PC-9 (cell line): ENCODE measurements at regions of chr1 and their contacts with region 1.

Region 1: DNA sequence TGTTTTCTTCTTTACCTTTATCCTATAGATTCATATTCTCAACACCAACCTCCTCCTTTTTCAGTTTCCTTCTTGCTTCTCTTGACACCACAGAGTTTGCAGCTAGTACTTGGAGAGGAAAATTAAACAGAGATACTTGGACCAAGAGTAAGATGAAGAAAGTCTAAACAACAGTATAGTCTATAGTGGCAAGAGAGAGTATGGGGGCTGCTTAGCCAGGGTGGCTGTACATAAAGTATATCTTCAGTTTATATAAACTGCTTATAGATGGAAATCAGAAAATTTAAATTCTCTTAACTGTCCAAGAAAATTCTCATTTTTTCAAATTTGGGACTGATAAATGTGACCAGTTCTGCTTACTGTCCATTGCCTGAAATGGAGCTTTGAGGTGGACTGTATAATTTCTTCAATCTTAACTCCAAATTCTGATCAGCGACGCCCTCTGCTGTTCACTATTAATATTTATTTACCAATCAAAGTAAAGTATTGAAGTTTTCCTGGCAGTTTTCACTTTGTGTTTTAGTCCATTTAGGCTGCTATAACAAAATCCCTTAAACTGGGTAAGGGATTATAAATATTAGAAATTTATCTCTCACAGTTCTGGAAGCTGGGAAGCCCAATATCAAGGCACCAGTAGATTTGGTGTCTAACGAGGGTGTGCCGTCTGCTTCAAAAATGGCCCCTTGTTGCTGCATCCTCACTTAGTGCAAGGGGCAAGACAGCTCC is 14.8 kb upstream of the METTL18 start:
- DNase-seq: no peak
- H3K4me3 ChIP-seq: no peak overlapping the region
- H3K27ac ChIP-seq: no peak overlapping the region
- H3K4me1 ChIP-seq: no peaks in the 10 kb centered on the region
- H3K27me3 ChIP-seq: no peaks in the 10 kb centered on the region
- CTCF ChIP-seq: peak; percentile 84

Region 2: DNA sequence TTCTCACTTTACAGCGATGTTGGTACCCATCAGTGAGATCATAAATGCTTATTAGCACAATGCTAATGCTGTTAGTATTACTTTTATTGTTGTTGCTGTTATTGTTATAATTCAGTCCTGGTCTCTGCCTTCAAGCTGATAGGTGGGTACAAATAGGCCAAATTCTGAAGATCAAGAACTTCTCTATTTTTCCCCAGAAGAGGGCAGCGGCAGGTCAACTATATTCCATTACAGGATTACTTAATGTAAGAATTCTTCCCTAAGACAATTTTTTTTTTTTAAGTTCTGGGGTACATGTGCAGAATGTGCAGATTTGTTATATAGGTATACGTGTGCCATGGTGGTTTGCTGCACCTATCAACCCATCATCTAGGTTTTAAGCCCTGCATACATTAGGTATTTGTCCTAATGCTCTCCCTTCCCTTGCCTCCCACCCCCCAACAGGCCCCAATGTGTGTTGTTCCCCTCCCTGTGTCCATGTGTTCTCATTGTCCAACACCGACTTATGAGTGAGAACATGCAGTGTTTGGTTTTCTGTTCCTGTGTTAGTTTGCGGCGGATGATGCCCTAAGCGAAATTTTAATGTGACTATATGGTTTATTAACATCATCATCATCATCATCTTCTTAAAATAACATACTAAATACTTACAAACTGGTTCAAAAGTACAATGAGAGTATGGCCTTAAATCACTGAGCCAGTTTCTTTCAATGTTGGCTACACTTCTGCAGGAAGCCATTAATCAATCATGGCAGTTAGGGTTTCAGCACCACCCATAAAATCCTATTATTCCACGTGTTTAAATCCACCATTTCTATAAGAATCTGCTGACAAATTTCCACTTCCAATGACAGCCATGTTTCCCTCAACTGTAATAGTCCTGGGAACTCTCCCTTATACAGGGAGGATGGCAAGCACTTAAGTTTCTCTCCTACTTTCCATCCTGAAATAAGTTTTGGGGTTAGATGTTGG is 343.0 kb before region 1 on chr1:
- CTCF ChIA-PET with region 1: no interaction called
- POLR2A ChIA-PET with region 1: no interaction called
- intact Hi-C with region 1: loop called (anchors 5 kb)
- DNase-seq: peak in 1 of 2 experiments; percentile 29
- H3K4me3 ChIP-seq: no peak overlapping the region
- H3K27ac ChIP-seq: no peak overlapping the region
- H3K4me1 ChIP-seq: no peaks in the 10 kb centered on the region
- H3K27me3 ChIP-seq: no peaks in the 10 kb centered on the region
- CTCF ChIP-seq: peak; percentile 67; the same call in 1 of the 2 replicates

Region 3: GRCh38 chr1:169546087-169546995 is 263.2 kb before region 1 on chr1:
- CTCF ChIA-PET with region 1: no interaction called
- POLR2A ChIA-PET with region 1: no interaction called
- intact Hi-C with region 1: loop called (anchors 1 kb)
- DNase-seq: peak; percentile 44 to 63
- H3K4me3 ChIP-seq: no peak overlapping the region
- H3K27ac ChIP-seq: no peak overlapping the region
- H3K4me1 ChIP-seq: no peaks in the 10 kb centered on the region
- H3K27me3 ChIP-seq: no peaks in the 10 kb centered on the region
- CTCF ChIP-seq: peak; percentile 90

Region 4: GRCh38 chr1:169601093-169601881 is 208.2 kb before region 1 on chr1:
- CTCF ChIA-PET with region 1: interaction called, 3 read pairs
- POLR2A ChIA-PET with region 1: no interaction called
- intact Hi-C with region 1: loop called (anchors 1 kb)
- DNase-seq: no peak
- H3K4me3 ChIP-seq: no peak overlapping the region
- H3K27ac ChIP-seq: no peak overlapping the region
- H3K4me1 ChIP-seq: no peaks in the 10 kb centered on the region
- H3K27me3 ChIP-seq: no peaks in the 10 kb centered on the region
- CTCF ChIP-seq: peak; percentile 76